IMR-90 (cell line): ENCODE measurements at regions of chr3 and their contacts with region 1.

Region 1: GRCh38 chr3:73584873-73585272 is 39.9 kb downstream of the PDZRN3 start:
- DNase-seq: no peak
- ATAC-seq: no peak
- H3K4me3 ChIP-seq: no peak overlapping the region
- H3K27ac ChIP-seq: no peak overlapping the region
- H3K4me1 ChIP-seq: peaks cover 5% of the 10 kb centered on the region; the same call in 1 of the 2 replicates
- H3K27me3 ChIP-seq: no peaks in the 10 kb centered on the region
- CTCF ChIP-seq: no peak
- POLR2A ChIP-seq: no peak
- RAD21 ChIP-seq: no peak

Region 2: DNA sequence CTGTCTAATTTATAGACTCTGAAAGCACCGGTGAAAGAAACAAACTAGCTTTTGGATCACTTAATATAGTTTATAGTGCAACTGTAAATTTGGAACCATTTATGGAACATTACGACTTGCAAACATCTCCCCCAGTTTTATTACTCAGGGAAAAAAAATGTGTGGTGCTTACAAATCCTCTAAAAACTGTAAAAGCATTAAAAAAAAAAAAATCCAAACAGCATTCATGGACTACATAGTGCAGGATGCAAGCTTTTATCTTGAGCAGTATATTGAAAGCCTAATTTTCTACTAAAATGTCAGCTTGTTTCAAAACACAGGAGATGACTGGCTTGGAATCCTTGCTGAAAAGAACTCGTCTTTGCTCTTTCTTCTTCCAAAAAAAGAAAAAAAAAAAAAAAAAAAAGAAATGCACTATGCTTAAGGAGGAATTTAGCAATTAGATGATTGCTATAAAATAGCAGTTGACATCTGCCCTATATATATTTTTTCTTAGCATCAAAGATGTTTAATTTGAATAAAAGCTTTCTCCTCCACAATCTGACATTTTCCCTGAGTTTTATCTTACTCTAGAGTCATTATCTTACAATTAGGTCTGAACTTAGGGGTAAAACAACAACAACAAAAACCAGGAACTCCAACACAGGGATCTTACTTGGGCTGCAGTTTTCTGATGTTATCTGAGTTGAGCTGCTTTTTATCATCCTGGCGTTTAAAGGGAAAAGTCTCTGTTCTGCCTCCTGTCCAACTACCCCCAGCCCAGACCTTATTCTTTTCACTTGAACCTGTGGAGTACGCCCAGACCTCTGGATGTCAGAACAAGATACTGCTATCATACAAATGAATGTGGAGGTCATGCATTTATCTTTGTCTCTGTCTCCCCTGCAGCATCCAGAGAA is 102.5 kb after region 1 on chr3:
- CTCF ChIA-PET with region 1: no interaction called
- POLR2A ChIA-PET with region 1: interaction called, 13 read pairs
- dilution Hi-C with region 1: no loop called
- in situ Hi-C with region 1: no loop called
- intact Hi-C with region 1: no loop called
- DNase-seq: peak; percentile 71
- ATAC-seq: peak; percentile 81
- H3K4me3 ChIP-seq: no peak overlapping the region
- H3K27ac ChIP-seq: peak overlapping the region; percentile 80
- H3K4me1 ChIP-seq: peaks cover 11% of the 10 kb centered on the region
- H3K27me3 ChIP-seq: no peaks in the 10 kb centered on the region
- CTCF ChIP-seq: no peak
- POLR2A ChIP-seq: no peak
- RAD21 ChIP-seq: no peak